Heart right ventricle (tissue), 16 donors: ENCODE measurements at regions of chr1 and their contacts with region 1.

Region 1: GRCh38 chr1:3423245-3423829 is 31.1 kb upstream of the ARHGEF16 start:
- DNase-seq: peak; percentile 87 to 88
- ATAC-seq: peak; percentile 87 to 94 (median 92)
- H3K4me3 ChIP-seq: peak overlapping the region in 1 of 10 donors; percentile 18
- H3K27ac ChIP-seq: peak overlapping the region; percentile 64 to 94 (median 84)
- H3K4me1 ChIP-seq: peaks cover 11 to 42% (median 37%) of the 10 kb centered on the region in 9 donors
- H3K27me3 ChIP-seq: peaks cover 0 to 5% (median 0%) of the 10 kb centered on the region in 7 donors
- CTCF ChIP-seq: no peak

Region 2: GRCh38 chr1:2412519-2413233 is 1010.7 kb before region 1 on chr1 and contains the start of gene PEX10:
- intact Hi-C with region 1: loop called in 5 of 10 experiments (anchors 5 to 10 kb)
- DNase-seq: peak; percentile 96 to 99
- ATAC-seq: peak; percentile 94 to 96 (median 94)
- H3K4me3 ChIP-seq: peak within 1 kb of the TSS; percentile 74 to 99 (median 86)
- H3K27ac ChIP-seq: peak within 1 kb of the TSS; percentile 76 to 93 (median 90)
- H3K4me1 ChIP-seq: peaks cover 3 to 37% (median 25%) of the 10 kb centered on the region in 9 donors
- H3K27me3 ChIP-seq: peaks cover 0 to 27% (median 20%) of the 10 kb centered on the region in 7 donors
- CTCF ChIP-seq: no peak
- total RNA-seq, gene PEX10: 14.6 to 26.0 (median 18.6) TPM

Region 3: GRCh38 chr1:2821966-2822620 is 601.2 kb before region 1 on chr1:
- intact Hi-C with region 1: loop called in 7 of 10 experiments (anchors 2 to 10 kb)
- DNase-seq: peak; percentile 32 to 62
- ATAC-seq: peak; percentile 62 to 82 (median 78)
- H3K4me3 ChIP-seq: no peak overlapping the region
- H3K27ac ChIP-seq: no peak overlapping the region
- H3K4me1 ChIP-seq: no peaks in the 10 kb centered on the region
- H3K27me3 ChIP-seq: peaks cover 0 to 46% (median 16%) of the 10 kb centered on the region in 7 donors
- CTCF ChIP-seq: peak; percentile 56 to 75 (median 65)

Region 4: DNA sequence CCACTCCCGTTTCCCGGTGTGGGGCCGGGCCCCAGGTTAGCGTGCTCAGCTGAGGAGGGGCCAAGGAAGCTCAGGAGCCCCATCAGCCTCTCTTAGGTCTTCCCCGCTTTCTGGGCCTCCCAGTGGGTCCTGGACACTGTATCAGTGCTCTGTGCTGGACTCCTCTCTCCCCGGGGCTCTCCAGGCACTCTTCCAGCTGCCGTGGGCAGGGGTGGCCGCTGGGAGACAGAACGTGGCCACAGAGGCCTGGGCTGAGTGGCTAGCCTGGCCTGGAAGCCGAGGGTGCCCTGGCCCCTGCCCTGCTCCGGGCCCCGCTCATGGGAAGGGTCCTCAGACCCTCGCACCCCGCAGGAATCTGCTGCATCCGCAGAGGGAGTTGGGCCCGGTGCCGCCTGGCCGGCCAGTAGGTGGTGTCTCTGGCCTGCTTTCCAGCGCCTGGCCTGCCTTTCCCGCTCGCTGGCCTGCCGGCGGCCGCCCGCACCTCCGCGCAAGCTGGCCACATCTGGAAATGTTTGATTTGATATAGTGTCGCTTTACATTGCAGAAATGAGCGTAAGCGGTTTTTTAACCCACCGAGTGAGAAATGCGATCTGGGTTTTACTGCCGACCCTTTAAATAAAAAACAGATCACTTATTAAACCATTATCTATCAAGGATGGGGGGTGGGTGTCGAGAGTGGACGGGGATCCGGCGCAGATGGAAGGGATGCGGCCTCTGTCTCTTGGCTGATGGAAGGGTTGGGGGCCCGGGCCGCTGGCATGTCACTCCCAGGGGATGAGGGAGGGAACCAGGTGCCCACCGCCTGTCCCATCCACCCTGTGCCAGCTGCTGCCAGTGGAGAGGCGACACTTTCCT is 547.4 kb before region 1 on chr1:
- intact Hi-C with region 1: loop called in 2 of 10 experiments (anchors 2 to 10 kb)
- DNase-seq: peak in 1 of 2 donors; percentile 45
- ATAC-seq: peak in 6 of 8 donors; percentile 23 to 67 (median 50)
- H3K4me3 ChIP-seq: no peak overlapping the region
- H3K27ac ChIP-seq: no peak overlapping the region
- H3K4me1 ChIP-seq: peaks cover 0 to 14% (median 0%) of the 10 kb centered on the region in 9 donors
- H3K27me3 ChIP-seq: peaks cover 0 to 62% (median 14%) of the 10 kb centered on the region in 7 donors
- CTCF ChIP-seq: peak in 8 of 9 donors; percentile 24 to 65 (median 50)

Region 5: DNA sequence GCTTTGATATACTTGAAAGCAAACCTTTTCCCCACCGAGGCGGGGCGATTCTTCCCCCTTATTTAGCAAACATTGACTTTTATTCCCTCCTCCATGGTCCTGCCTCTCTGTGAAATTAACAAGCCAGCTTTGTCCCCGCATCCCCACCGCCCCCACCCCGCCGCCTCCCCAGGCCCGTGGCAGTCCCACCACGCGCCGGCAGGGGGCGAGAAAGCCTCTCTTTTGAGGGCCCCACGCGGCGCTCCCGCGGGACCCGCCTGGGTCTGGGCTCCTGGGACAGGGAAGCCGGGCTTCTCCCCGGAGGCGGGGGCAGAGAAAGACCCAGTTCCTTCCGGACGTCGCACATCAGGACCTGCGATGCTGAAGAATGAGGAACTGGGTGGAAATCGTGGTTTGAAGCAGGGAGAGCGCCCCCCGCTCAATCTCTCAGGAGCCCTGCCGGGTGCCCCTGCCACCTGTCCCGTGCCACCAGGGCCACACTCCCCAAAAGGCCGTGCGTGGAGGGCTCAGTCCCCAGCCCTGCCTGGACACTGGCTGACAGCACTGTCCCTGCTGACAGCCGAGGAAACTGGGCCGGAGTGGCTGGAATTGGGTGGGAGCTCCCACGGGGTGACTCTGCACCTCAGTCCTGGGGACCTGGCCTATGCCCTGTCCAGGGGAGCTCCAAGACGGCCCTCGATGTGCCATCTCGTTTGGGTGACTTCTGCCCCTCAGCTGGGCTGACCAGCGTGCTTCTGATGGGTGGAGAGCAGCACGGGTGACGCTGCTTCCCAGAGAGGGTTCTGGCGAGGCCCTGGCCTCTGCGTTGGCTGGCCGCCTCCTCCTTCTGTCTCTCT is 410.7 kb before region 1 on chr1:
- intact Hi-C with region 1: loop called in 9 of 10 experiments (anchors 1 to 5 kb)
- DNase-seq: peak; percentile 41 to 73
- ATAC-seq: peak; percentile 58 to 85 (median 82)
- H3K4me3 ChIP-seq: no peak overlapping the region
- H3K27ac ChIP-seq: no peak overlapping the region
- H3K4me1 ChIP-seq: peaks cover 0 to 13% (median 2%) of the 10 kb centered on the region in 9 donors
- H3K27me3 ChIP-seq: peaks cover 3 to 72% (median 45%) of the 10 kb centered on the region in 7 donors
- CTCF ChIP-seq: peak; percentile 76 to 90 (median 81)

Region 6: GRCh38 chr1:3261007-3261968 is 162.0 kb before region 1 on chr1:
- intact Hi-C with region 1: no loop called
- DNase-seq: peak in 1 of 2 donors; percentile 32
- ATAC-seq: peak in 6 of 8 donors; percentile 17 to 79 (median 48)
- H3K4me3 ChIP-seq: no peak overlapping the region
- H3K27ac ChIP-seq: peak overlapping the region in 4 of 10 donors; percentile 12 to 44 (median 20)
- H3K4me1 ChIP-seq: peaks cover 0 to 54% (median 5%) of the 10 kb centered on the region in 9 donors
- H3K27me3 ChIP-seq: peaks cover 0 to 16% (median 0%) of the 10 kb centered on the region in 7 donors
- CTCF ChIP-seq: no peak

Region 7: GRCh38 chr1:3283849-3284248 is 139.5 kb before region 1 on chr1:
- intact Hi-C with region 1: loop called in 2 of 10 experiments (anchors 10 kb)
- DNase-seq: peak; percentile 53 to 62
- ATAC-seq: peak; percentile 60 to 89 (median 74)
- H3K4me3 ChIP-seq: peak overlapping the region in 5 of 10 donors; percentile 3 to 30 (median 20)
- H3K27ac ChIP-seq: peak overlapping the region in 8 of 10 donors; percentile 44 to 75 (median 55)
- H3K4me1 ChIP-seq: peaks cover 0 to 24% (median 13%) of the 10 kb centered on the region in 9 donors
- H3K27me3 ChIP-seq: peaks cover 0 to 35% (median 15%) of the 10 kb centered on the region in 7 donors
- CTCF ChIP-seq: peak; percentile 46 to 89 (median 74)

Region 8: GRCh38 chr1:3352299-3352951 is 70.9 kb before region 1 on chr1:
- intact Hi-C with region 1: loop called in 1 of 10 experiments (anchors 5 kb)
- DNase-seq: no peak
- ATAC-seq: peak in 4 of 8 donors; percentile 6 to 40 (median 18)
- H3K4me3 ChIP-seq: peak overlapping the region in 1 of 10 donors; percentile 5
- H3K27ac ChIP-seq: peak overlapping the region; percentile 69 to 98 (median 88)
- H3K4me1 ChIP-seq: peaks cover 25 to 96% (median 59%) of the 10 kb centered on the region in 9 donors
- H3K27me3 ChIP-seq: peaks cover 0 to 56% (median 14%) of the 10 kb centered on the region in 7 donors
- CTCF ChIP-seq: no peak

Region 9: GRCh38 chr1:3515774-3516480 is 92.6 kb after region 1 on chr1:
- intact Hi-C with region 1: no loop called
- DNase-seq: no peak
- ATAC-seq: no peak
- H3K4me3 ChIP-seq: no peak overlapping the region
- H3K27ac ChIP-seq: no peak overlapping the region
- H3K4me1 ChIP-seq: no peaks in the 10 kb centered on the region
- H3K27me3 ChIP-seq: no peaks in the 10 kb centered on the region
- CTCF ChIP-seq: no peak